B cell (primary cell): ENCODE measurements at regions of chr6 and their contacts with region 1.

Region 1: GRCh38 chr6:144343701-144344428 is 58.7 kb downstream of the UTRN start:
- DNase-seq: peak; percentile 83
- ATAC-seq: peak; percentile 88
- H3K4me3 ChIP-seq: peak overlapping the region; percentile 59 to 95 (median 66)
- H3K4me3 Mint-ChIP-seq: peak overlapping the region; percentile 98
- H3K27ac ChIP-seq: peak overlapping the region; percentile 88 to 89
- H3K27ac Mint-ChIP-seq: peak overlapping the region; percentile 93
- H3K4me1 ChIP-seq: peaks cover 80 to 87% of the 10 kb centered on the region in 2 donors
- H3K4me1 Mint-ChIP-seq: peaks cover 89% of the 10 kb centered on the region
- H3K27me3 ChIP-seq: no peaks in the 10 kb centered on the region
- H3K27me3 Mint-ChIP-seq: no peaks in the 10 kb centered on the region
- CTCF ChIP-seq: no peak

Region 2: DNA sequence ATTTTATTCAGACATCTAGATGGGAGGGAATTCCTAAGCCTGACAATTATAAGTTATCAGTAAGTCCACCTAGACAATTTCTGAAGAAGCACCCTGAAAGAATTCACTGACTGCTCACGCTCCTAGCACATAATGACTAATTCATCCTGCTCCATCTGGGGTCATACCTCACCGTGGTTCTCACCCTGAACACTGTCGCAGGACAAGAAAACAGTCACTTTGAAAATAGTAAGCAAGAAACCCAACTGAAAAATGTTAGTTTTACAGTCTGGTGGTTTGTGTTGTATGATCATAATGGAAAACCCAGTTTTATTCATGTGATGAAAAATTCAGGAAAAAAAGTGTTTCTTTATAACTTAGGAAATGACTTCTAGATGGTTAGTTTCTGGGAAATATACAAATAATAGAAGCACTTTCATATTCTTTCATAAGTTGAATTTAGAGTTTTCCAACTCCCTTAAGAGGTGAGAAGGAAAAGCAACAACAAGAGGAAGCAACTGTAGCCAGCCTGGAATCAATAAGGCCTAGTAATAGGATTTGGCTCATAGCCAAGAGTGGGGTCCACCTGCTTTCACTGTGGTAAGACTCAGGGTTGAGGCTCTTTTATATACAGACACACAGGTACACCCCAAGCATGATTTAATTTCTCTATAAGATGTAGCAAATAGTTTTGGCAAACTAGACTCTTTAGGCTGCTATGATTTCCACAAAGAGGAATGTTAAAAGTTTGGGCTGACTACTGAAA is 1493.0 kb before region 1 on chr6:
- CTCF ChIA-PET with region 1: no interaction called
- POLR2A ChIA-PET with region 1: no interaction called
- intact Hi-C with region 1: no loop called
- DNase-seq: no peak
- ATAC-seq: no peak
- H3K4me3 ChIP-seq: no peak overlapping the region
- H3K4me3 Mint-ChIP-seq: peak overlapping the region; percentile 39
- H3K27ac ChIP-seq: no peak overlapping the region
- H3K27ac Mint-ChIP-seq: peak overlapping the region; percentile 38
- H3K4me1 ChIP-seq: peaks cover 70 to 81% of the 10 kb centered on the region in 2 donors
- H3K4me1 Mint-ChIP-seq: peaks cover 91% of the 10 kb centered on the region
- H3K27me3 ChIP-seq: no peaks in the 10 kb centered on the region
- H3K27me3 Mint-ChIP-seq: no peaks in the 10 kb centered on the region
- CTCF ChIP-seq: no peak

Region 3: DNA sequence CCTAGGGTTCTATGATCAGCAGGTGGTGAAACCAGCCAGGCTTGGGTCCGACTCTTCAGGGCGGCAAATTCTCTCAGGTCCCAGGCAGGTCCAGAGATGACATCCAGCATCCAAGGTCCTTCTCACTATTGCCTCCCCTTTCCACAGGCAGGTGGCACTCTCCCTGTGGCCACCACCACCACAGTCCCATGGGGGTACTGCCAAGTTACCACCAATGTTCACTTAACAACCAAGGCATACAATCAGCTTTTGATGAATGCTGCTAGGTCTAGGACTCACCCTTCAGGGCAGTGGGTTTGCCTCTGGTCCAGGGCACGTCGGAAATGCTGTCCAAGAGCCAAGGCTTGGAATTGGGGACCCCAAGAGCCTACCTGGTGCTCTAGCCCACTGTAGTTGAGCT is 99.2 kb before region 1 on chr6:
- CTCF ChIA-PET with region 1: no interaction called
- POLR2A ChIA-PET with region 1: no interaction called
- intact Hi-C with region 1: no loop called
- DNase-seq: peak; percentile 27
- ATAC-seq: no peak
- H3K4me3 ChIP-seq: no peak overlapping the region
- H3K4me3 Mint-ChIP-seq: no peak overlapping the region
- H3K27ac ChIP-seq: no peak overlapping the region
- H3K27ac Mint-ChIP-seq: no peak overlapping the region
- H3K4me1 ChIP-seq: peaks cover 0 to 3% of the 10 kb centered on the region in 2 donors
- H3K4me1 Mint-ChIP-seq: peaks cover 15% of the 10 kb centered on the region
- H3K27me3 ChIP-seq: peaks cover 0 to 3% (median 0%) of the 10 kb centered on the region in 4 experiments
- H3K27me3 Mint-ChIP-seq: peaks cover 15% of the 10 kb centered on the region
- CTCF ChIP-seq: no peak

Region 4: DNA sequence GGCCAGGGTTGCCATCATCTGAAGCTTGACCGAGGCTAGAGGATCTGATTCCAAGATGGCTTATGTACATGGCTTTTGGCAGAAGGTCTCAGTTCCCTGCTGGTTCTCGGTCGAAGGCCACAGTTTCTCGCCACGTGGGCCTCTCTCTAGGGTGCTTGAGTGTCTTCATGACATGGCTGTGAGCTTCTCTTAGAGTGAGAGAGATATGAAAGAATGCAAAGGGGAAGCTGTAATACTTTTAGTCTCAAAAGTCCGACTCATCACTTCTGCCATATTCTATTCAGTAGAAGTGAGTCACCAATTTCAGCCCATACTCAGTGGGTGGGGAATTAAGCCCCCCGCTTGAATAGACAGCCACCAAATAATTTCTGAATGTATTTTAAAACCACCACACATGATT is 35.5 kb after region 1 on chr6:
- CTCF ChIA-PET with region 1: no interaction called
- POLR2A ChIA-PET with region 1: interaction called, 19 read pairs
- intact Hi-C with region 1: no loop called
- DNase-seq: no peak
- ATAC-seq: peak; percentile 36
- H3K4me3 ChIP-seq: no peak overlapping the region
- H3K4me3 Mint-ChIP-seq: no peak overlapping the region
- H3K27ac ChIP-seq: no peak overlapping the region
- H3K27ac Mint-ChIP-seq: no peak overlapping the region
- H3K4me1 ChIP-seq: peaks cover 11 to 13% of the 10 kb centered on the region in 2 donors
- H3K4me1 Mint-ChIP-seq: peaks cover 41% of the 10 kb centered on the region
- H3K27me3 ChIP-seq: no peaks in the 10 kb centered on the region
- H3K27me3 Mint-ChIP-seq: no peaks in the 10 kb centered on the region
- CTCF ChIP-seq: no peak